ENCODE measurements at regions of chr19 and their contacts with region 1.

Region 1: GRCh38 chr19:5031231-5032100 is 62.6 kb downstream of the KDM4B start:
- DNase-seq: peak; percentile 82 to 89 (median 88)
- ATAC-seq: peak; percentile 95
- H3K4me3 ChIP-seq: no peak overlapping the region
- H3K4me1 ChIP-seq: no peaks in the 10 kb centered on the region
- CTCF ChIP-seq: peak; percentile 93

Region 2: DNA sequence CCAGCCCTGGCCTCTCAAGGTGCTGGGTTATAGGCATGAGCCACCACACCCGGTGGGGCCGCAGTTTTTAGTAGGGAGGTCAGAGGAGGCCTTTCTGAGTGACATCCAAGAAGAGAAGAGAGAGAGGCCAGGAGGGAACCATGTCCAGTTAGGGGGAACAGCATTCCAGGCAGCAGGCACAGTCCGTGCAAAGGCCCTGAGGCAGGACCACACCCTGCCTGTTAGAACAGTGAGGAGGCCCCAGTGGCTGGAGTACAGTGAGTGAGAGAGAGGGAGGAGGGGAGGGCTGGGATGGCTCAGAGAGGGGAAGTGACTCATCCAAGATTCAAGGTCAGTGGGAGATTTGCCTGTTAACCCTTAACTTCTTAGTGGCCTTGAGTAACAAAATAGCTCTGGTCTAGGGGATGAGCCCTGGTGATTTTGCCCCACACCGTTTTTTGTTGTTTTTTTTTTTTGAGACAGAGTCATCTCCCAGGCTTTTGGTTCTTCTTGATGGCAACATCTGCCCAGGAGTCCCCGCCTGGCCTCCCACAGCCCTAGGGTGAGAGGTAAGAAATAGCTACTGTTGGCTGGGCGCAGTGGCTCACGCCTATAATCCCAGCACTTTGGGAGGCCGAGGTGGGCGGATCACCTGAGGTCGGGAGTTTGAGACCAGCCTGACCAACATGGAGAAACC is 161.3 kb before region 1 on chr19:
- intact Hi-C with region 1: loop called (anchors 5 kb)
- DNase-seq: peak; percentile 47 to 69 (median 60)
- ATAC-seq: peak; percentile 63
- H3K4me3 ChIP-seq: no peak overlapping the region
- H3K4me1 ChIP-seq: peaks cover 8% of the 10 kb centered on the region
- CTCF ChIP-seq: no peak